BJ (cell line): ENCODE measurements at regions of chr1 and their contacts with region 1.

Region 1: GRCh38 chr1:23098463-23099170 is 70.0 kb downstream of the LUZP1 start:
- DNase-seq: no peak
- H3K4me3 ChIP-seq: no peak overlapping the region
- H3K27me3 ChIP-seq: no peaks in the 10 kb centered on the region
- CTCF ChIP-seq: peak; percentile 92

Region 2: GRCh38 chr1:23108918-23109533 is 10.4 kb after region 1 on chr1:
- CTCF ChIA-PET with region 1: interaction called, 12 read pairs
- POLR2A ChIA-PET with region 1: interaction called, 4 read pairs
- DNase-seq: no peak
- H3K4me3 ChIP-seq: no peak overlapping the region
- H3K27me3 ChIP-seq: no peaks in the 10 kb centered on the region
- CTCF ChIP-seq: no peak

Region 3: DNA sequence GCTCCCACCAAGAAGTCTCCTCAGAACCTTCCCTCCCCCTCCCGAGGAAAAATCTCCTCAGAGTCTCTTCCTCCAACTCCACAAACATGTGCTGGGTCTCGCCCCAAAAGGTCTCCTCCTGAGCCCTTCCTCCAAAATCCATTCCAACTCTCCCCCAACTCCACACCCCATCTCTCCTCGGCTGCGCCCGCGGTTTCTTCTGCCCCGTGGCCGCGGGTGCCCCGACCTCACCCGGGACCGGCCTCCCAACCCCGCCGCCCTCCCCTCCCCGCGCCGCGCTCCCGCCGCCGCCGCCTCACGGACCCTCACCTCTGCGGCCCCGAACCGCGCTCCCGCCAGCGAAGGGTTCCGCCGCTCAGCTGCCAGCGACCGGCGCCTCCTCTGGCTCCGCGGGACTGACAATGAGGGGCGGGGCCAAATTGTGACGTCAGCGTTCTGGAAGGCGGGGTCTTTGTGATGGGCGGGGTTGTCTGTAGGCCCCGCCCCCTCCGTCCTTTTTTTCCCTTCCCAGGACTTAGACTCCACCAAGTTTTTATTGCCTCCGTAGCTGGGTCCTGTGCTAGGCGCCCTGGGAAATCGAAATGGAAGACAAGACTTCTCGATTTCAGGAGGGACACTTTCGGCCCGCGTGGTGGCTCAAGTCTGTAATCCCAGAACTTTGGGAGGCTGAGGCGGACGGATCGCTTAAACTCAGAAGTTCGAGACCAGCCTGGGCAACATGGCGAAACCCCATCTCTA is 70.0 kb after region 1 on chr1 and contains the start of gene LUZP1:
- CTCF ChIA-PET with region 1: interaction called, 10 read pairs
- POLR2A ChIA-PET with region 1: no interaction called
- DNase-seq: no peak
- H3K4me3 ChIP-seq: peak within 1 kb of the TSS; percentile 81
- H3K27me3 ChIP-seq: no peaks in the 10 kb centered on the region
- CTCF ChIP-seq: no peak
- polyA plus RNA-seq, gene LUZP1: 22.0 and 24.5 TPM in 2 replicates

Region 4: GRCh38 chr1:23184212-23184934 is 85.8 kb after region 1 on chr1:
- CTCF ChIA-PET with region 1: interaction called, 412 read pairs
- POLR2A ChIA-PET with region 1: no interaction called
- DNase-seq: no peak
- H3K4me3 ChIP-seq: peak overlapping the region; percentile 23; the same call in 1 of the 2 replicates
- H3K27me3 ChIP-seq: no peaks in the 10 kb centered on the region
- CTCF ChIP-seq: peak; percentile 61